ENCODE measurements at regions of chr10 and their contacts with region 1.

Region 1: GRCh38 chr10:115491526-115492140 is 398.5 kb downstream of the ATRNL1 start:
- DNase-seq: no peak
- H3K4me3 Mint-ChIP-seq: no peak overlapping the region
- H3K27ac Mint-ChIP-seq: no peak overlapping the region
- H3K4me1 Mint-ChIP-seq: no peaks in the 10 kb centered on the region
- H3K27me3 Mint-ChIP-seq: peaks cover 33% of the 10 kb centered on the region
- CTCF ChIP-seq: no peak

Region 2: GRCh38 chr10:114060456-114060855 is 1431.2 kb before region 1 on chr10:
- CTCF ChIA-PET with region 1: interaction called, 11 read pairs
- intact Hi-C with region 1: no loop called
- DNase-seq: no peak
- H3K4me3 Mint-ChIP-seq: no peak overlapping the region
- H3K27ac Mint-ChIP-seq: no peak overlapping the region
- H3K4me1 Mint-ChIP-seq: no peaks in the 10 kb centered on the region
- H3K27me3 Mint-ChIP-seq: no peaks in the 10 kb centered on the region
- CTCF ChIP-seq: no peak

Measured in Calu3 (cell line).